Caco-2 (cell line): ENCODE measurements at regions of chr19 and their contacts with region 1.

Region 1: DNA sequence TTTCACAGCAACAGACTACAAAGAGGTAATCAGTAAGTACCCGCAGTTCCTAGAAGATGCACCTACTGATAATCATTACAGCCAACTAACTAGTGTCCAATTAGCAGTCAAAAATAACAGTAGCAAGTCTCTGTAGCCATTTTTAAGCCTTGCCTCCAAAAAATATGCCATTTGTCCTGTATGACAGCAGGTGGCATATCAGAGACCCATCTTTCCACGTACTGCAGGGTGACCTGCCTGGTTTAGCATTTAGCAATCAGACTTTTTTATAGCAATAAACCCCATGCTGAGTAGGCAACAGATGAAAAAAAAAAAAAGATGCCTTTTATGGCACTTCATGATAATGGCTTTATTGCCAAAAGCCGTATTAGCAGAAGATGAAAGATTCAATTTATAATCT is 155.3 kb upstream of the LSM14A start:
- DNase-seq: peak in 1 of 2 experiments; percentile 26
- H3K4me3 ChIP-seq: no peak overlapping the region
- H3K4me3 Mint-ChIP-seq: no peak overlapping the region
- H3K27ac Mint-ChIP-seq: no peak overlapping the region
- H3K4me1 ChIP-seq: peaks cover 21% of the 10 kb centered on the region
- H3K4me1 Mint-ChIP-seq: peaks cover 5% of the 10 kb centered on the region
- H3K27me3 ChIP-seq: no peaks in the 10 kb centered on the region
- H3K27me3 Mint-ChIP-seq: no peaks in the 10 kb centered on the region
- CTCF ChIP-seq: no peak

Region 2: DNA sequence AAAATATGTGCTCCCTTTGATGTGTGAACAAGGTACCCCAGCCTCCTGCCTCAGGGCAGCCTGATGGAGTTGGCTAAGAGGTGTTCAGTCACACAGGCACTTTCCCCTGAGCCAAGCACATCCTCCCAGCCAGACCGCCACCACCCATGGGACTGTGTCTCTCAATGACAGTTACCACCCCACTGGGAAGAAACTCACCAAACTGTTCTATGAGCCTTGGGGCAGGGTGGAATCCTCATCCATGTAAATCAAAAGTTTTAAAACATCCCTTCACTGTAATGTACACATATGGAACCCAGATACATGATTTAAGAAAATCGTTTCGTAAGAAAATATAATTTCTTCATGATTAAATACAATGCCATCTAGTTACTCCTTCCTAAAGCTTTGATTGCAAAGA is 16.9 kb after region 1 on chr19:
- CTCF ChIA-PET with region 1: no interaction called
- POLR2A ChIA-PET with region 1: no interaction called
- intact Hi-C with region 1: no loop called
- DNase-seq: no peak
- H3K4me3 ChIP-seq: no peak overlapping the region
- H3K4me3 Mint-ChIP-seq: no peak overlapping the region
- H3K27ac Mint-ChIP-seq: no peak overlapping the region
- H3K4me1 ChIP-seq: peaks cover 24% of the 10 kb centered on the region
- H3K4me1 Mint-ChIP-seq: peaks cover 35% of the 10 kb centered on the region
- H3K27me3 ChIP-seq: no peaks in the 10 kb centered on the region
- H3K27me3 Mint-ChIP-seq: no peaks in the 10 kb centered on the region
- CTCF ChIP-seq: no peak

Region 3: GRCh38 chr19:34044021-34044420 is 27.0 kb after region 1 on chr19:
- CTCF ChIA-PET with region 1: no interaction called
- POLR2A ChIA-PET with region 1: no interaction called
- intact Hi-C with region 1: loop called (anchors 1 kb)
- DNase-seq: peak; percentile 76 to 79
- H3K4me3 ChIP-seq: no peak overlapping the region
- H3K4me3 Mint-ChIP-seq: peak overlapping the region; percentile 9
- H3K27ac Mint-ChIP-seq: peak overlapping the region; percentile 56
- H3K4me1 ChIP-seq: peaks cover 16% of the 10 kb centered on the region
- H3K4me1 Mint-ChIP-seq: peaks cover 24% of the 10 kb centered on the region
- H3K27me3 ChIP-seq: no peaks in the 10 kb centered on the region
- H3K27me3 Mint-ChIP-seq: no peaks in the 10 kb centered on the region
- CTCF ChIP-seq: no peak

Region 4: GRCh38 chr19:34145741-34146202 is 128.7 kb after region 1 on chr19:
- CTCF ChIA-PET with region 1: no interaction called
- POLR2A ChIA-PET with region 1: no interaction called
- intact Hi-C with region 1: loop called (anchors 1 kb)
- DNase-seq: peak; percentile 58 to 70
- H3K4me3 ChIP-seq: no peak overlapping the region
- H3K4me3 Mint-ChIP-seq: no peak overlapping the region
- H3K27ac Mint-ChIP-seq: no peak overlapping the region
- H3K4me1 ChIP-seq: no peaks in the 10 kb centered on the region; the same call in 1 of the 2 replicates
- H3K4me1 Mint-ChIP-seq: peaks cover 5% of the 10 kb centered on the region
- H3K27me3 ChIP-seq: no peaks in the 10 kb centered on the region
- H3K27me3 Mint-ChIP-seq: no peaks in the 10 kb centered on the region
- CTCF ChIP-seq: peak; percentile 73 to 76